Ascending aorta (tissue), 2 donors: ENCODE measurements at regions of chr3 and their contacts with region 1.

Region 1: DNA sequence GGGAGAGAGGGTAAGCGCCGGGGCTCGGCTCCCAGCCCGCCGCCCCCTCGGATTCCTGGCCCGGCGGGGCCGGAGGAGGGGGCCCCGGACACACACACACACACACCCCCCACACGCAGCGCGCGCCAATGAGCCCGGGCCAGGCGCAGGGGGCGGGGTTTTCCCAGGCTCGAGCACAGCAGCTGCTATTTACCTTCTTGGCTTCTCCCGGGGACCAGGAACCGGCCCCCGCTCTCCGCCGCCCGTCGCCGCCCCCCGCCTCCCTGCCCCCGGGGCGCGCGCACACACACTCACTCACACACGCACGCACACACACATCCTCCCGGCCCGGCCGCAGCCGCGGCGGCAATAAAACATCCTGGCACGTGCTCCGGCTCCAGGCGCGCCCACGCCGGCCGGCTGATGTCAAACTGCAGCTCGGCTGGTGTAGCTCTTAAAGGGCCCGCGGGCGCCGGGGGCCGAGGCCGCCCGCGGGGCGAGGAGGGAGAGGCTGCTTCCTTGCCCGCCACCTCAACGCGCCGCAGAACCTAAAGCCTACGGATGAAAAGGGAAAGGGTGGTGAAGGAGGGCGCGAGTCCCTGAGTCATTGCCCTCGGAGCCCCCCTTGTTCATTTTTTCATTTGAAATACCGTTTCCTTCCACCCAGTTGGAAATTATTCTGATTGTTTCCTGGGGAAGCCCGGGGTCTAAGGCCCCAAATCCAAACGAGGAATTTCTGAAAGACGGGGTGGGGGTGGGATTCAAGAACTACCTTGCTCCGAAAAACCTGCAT is 1.0 kb upstream of the HES1 start:
- DNase-seq: peak; percentile 84 to 94
- H3K4me3 ChIP-seq: peak overlapping the region; percentile 80 to 87
- H3K27ac ChIP-seq: peak overlapping the region; percentile 96 to 98
- H3K4me1 ChIP-seq: peaks cover 6 to 31% of the 10 kb centered on the region in 2 donors
- H3K27me3 ChIP-seq: no peaks in the 10 kb centered on the region
- CTCF ChIP-seq: no peak

Region 2: DNA sequence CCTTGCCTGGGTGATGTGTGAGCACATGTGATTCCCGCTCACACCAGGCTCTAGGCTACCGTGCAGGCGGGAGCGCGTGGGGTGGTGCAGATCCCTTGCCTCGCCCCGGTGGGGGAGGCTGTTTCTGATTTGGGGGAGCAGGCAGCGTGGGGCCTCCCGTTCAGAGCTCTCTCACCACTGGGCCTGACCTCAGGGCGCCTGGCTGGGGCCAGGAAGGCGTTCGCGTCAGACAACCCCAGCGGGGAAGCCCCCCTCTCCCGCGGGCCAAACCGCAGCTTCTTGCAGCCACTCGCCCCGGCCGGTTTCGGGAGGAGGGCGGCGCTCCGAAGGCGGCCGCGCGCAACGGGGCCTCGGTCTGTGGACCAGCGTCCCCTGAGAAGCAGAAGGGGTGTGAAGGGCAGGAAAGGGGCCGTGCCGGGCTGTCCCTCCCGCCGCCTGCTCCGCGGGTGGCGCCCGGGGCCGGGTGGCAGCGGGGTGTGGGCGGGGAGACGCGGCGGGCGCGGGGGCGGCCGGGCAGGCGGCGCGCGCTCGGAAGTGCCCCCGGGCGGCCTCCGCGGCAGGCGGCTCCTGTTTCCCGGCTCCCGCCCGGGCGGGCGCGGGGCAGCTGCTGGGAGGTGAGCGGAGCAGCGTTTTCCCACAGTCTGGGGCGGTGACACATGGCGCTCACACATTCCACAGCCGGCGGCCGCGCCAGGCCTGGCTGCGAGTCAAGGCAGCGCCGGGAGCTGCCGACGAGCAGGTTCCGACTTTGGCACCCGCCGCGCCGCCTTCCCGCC is 64.1 kb before region 1 on chr3:
- intact Hi-C with region 1: loop called (anchors 1 kb)
- DNase-seq: peak; percentile 37 to 95
- H3K4me3 ChIP-seq: peak overlapping the region; percentile 53 to 76
- H3K27ac ChIP-seq: peak overlapping the region; percentile 74 to 86
- H3K4me1 ChIP-seq: peaks cover 6 to 10% of the 10 kb centered on the region in 2 donors
- H3K27me3 ChIP-seq: no peaks in the 10 kb centered on the region
- CTCF ChIP-seq: no peak

Region 3: GRCh38 chr3:194269610-194270145 is 134.7 kb after region 1 on chr3:
- intact Hi-C with region 1: loop called (anchors 1 kb)
- DNase-seq: peak; percentile 52 to 88
- H3K4me3 ChIP-seq: peak overlapping the region in 1 of 2 donors; percentile 15
- H3K27ac ChIP-seq: peak overlapping the region; percentile 93 to 95
- H3K4me1 ChIP-seq: peaks cover 16 to 40% of the 10 kb centered on the region in 2 donors
- H3K27me3 ChIP-seq: no peaks in the 10 kb centered on the region
- CTCF ChIP-seq: peak; percentile 23 to 56 (median 27)

Region 4: GRCh38 chr3:194486540-194487288 is 351.8 kb after region 1 on chr3 and contains the start of gene ATP13A3:
- intact Hi-C with region 1: loop called (anchors 5 kb)
- DNase-seq: peak; percentile 57 to 95
- H3K4me3 ChIP-seq: peak within 1 kb of the TSS; percentile 68 to 75
- H3K27ac ChIP-seq: peak within 1 kb of the TSS; percentile 91 to 95
- H3K4me1 ChIP-seq: peaks cover 21 to 35% of the 10 kb centered on the region in 2 donors
- H3K27me3 ChIP-seq: no peaks in the 10 kb centered on the region
- CTCF ChIP-seq: no peak
- total RNA-seq, gene ATP13A3: 53.6 TPM

Region 5: DNA sequence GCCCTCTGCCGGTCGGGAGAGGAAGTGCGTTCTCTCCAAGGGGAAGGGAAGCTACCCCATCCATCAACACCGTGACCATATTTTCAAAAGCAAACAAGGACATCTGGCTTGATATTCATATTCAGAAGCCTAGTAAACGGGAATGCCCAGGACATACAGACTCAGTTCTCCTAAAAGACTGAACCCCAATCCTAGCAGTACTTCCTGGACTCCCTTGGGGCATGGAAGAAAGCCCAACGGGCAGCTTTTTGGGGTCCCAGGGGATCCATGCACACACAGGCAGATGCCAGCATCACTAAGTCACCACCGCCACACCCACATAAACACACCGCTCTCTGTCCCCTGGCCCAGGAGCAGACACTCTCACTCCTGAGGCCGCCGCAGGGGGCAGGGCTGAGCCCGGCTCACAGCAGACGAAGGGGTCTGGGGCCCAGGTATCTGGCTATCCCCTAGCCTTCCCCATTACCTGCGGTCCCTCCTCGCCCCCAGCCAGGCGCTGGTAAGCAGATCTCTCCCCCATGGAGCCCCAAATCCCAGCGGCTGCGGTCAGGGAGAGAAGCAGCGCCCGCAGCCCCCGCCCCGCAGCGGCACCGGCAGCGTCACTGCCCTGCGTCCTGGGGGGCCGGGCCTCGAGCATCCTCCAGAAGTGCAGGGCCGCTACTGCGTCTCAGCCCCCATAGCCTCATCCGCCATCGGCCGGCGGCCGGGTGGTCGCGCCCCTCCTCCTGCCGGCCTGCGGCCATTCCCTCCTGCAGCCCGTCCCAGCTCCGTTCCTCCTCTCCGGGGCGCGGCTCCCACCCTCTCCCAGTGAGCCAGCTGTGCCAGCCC is 1760.1 kb after region 1 on chr3:
- intact Hi-C with region 1: loop called (anchors 10 kb)
- DNase-seq: peak in 1 of 2 donors; percentile 58
- H3K4me3 ChIP-seq: peak overlapping the region; percentile 77 to 90
- H3K27ac ChIP-seq: peak overlapping the region; percentile 94 to 98
- H3K4me1 ChIP-seq: peaks cover 20 to 55% of the 10 kb centered on the region in 2 donors
- H3K27me3 ChIP-seq: no peaks in the 10 kb centered on the region
- CTCF ChIP-seq: peak; percentile 87 to 97 (median 94)